MCF 10A (cell line): ENCODE measurements at regions of chr4 and their contacts with region 1.

Region 1: DNA sequence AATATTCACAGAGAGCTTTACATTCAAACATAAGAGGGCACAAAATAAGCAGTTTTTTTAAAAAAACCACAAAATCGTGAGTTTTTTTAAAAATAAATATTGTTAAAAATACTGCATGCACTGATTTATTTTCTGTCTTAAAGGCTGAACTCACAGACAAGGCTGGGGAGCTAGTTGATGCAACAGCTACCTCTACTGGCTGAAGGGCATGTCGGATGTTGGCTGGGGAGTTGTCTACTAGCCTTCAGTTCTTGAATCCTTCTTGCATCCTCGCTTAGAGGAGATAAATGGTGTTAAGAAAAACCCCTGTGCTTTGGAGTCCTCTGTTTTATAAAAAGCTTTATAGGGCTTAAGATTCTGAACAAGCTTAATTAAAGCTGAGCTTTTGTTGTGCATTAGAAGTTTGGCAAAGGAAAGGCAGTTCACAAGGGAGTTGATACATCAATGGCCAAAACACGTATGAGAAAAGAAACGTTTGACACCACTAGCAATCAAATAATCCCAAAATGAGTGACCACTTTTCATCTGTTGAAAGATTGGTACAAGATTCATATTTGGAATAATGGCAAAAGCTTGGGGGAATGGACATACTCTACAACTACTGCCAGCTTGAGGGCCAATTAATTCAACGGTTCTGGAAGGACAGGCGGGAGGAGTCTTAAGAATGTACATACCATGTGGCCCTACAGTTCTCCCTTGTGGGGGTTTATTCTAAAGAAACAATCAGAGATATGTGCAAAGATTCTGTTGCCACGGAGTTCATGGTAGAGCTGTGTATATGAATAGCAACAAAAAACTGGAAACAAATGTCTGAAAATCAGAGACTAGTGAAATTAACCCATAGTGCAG is 94.7 kb downstream of the SEL1L3 start:
- DNase-seq: peak; percentile 75
- H3K4me3 Mint-ChIP-seq: no peak overlapping the region
- H3K27ac Mint-ChIP-seq: no peak overlapping the region
- H3K4me1 Mint-ChIP-seq: no peaks in the 10 kb centered on the region
- H3K27me3 Mint-ChIP-seq: no peaks in the 10 kb centered on the region
- CTCF ChIP-seq: peak; percentile 85

Region 2: GRCh38 chr4:24809376-24809775 is 958.7 kb before region 1 on chr4:
- CTCF ChIA-PET with region 1: no interaction called
- POLR2A ChIA-PET with region 1: no interaction called
- intact Hi-C with region 1: no loop called
- DNase-seq: peak; percentile 6
- H3K4me3 Mint-ChIP-seq: no peak overlapping the region
- H3K27ac Mint-ChIP-seq: no peak overlapping the region
- H3K4me1 Mint-ChIP-seq: no peaks in the 10 kb centered on the region
- H3K27me3 Mint-ChIP-seq: no peaks in the 10 kb centered on the region
- CTCF ChIP-seq: no peak

Region 3: GRCh38 chr4:25424539-25425228 is 343.4 kb before region 1 on chr4:
- CTCF ChIA-PET with region 1: interaction called, 10 read pairs
- POLR2A ChIA-PET with region 1: no interaction called
- intact Hi-C with region 1: no loop called
- DNase-seq: no peak
- H3K4me3 Mint-ChIP-seq: no peak overlapping the region
- H3K27ac Mint-ChIP-seq: no peak overlapping the region
- H3K4me1 Mint-ChIP-seq: no peaks in the 10 kb centered on the region
- H3K27me3 Mint-ChIP-seq: no peaks in the 10 kb centered on the region
- CTCF ChIP-seq: no peak

Region 4: GRCh38 chr4:25433966-25434827 is 333.9 kb before region 1 on chr4:
- CTCF ChIA-PET with region 1: interaction called, 309 read pairs
- POLR2A ChIA-PET with region 1: interaction called, 4 read pairs
- intact Hi-C with region 1: no loop called
- DNase-seq: no peak
- H3K4me3 Mint-ChIP-seq: no peak overlapping the region
- H3K27ac Mint-ChIP-seq: no peak overlapping the region
- H3K4me1 Mint-ChIP-seq: no peaks in the 10 kb centered on the region
- H3K27me3 Mint-ChIP-seq: no peaks in the 10 kb centered on the region
- CTCF ChIP-seq: no peak

Region 5: DNA sequence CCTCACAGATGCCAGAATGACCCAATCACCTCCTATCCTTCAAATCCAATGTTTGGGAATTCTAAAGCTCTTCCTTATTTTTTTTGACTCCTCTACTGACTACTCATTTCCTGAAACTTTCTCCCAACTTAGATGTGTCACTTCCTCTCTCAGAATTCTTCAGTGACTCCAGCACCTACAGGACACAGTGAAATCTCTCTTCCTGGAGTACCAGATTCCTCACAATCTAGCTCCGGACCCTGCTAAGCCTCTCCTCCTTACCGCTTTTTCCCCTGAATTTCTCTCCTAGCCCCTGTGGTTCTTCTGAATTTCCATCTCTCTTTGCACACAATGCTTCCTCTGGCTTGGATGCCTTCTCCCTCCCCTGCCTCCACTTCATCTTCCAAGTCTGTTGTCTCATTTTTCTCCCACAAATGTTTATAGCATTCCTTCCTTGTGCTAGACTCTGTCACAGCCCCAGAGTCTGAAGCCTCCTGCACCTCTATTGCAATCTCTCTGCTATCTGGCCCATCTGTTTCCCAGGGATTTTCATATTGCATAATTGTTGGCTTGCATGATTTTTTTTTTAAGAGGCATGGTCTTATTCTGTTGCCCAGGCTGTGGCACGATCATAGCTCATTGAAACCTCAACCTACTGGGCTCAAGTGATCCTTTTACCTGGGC is 310.9 kb before region 1 on chr4:
- CTCF ChIA-PET with region 1: interaction called, 14 read pairs
- POLR2A ChIA-PET with region 1: interaction called, 5 read pairs
- intact Hi-C with region 1: no loop called
- DNase-seq: peak; percentile 70
- H3K4me3 Mint-ChIP-seq: no peak overlapping the region
- H3K27ac Mint-ChIP-seq: no peak overlapping the region
- H3K4me1 Mint-ChIP-seq: peaks cover 15% of the 10 kb centered on the region
- H3K27me3 Mint-ChIP-seq: no peaks in the 10 kb centered on the region
- CTCF ChIP-seq: no peak

Region 6: GRCh38 chr4:25779016-25779415 is 10.9 kb after region 1 on chr4:
- CTCF ChIA-PET with region 1: interaction called, 22 read pairs
- POLR2A ChIA-PET with region 1: interaction called, 3 read pairs
- intact Hi-C with region 1: no loop called
- DNase-seq: peak; percentile 39
- H3K4me3 Mint-ChIP-seq: no peak overlapping the region
- H3K27ac Mint-ChIP-seq: no peak overlapping the region
- H3K4me1 Mint-ChIP-seq: no peaks in the 10 kb centered on the region
- H3K27me3 Mint-ChIP-seq: no peaks in the 10 kb centered on the region
- CTCF ChIP-seq: no peak

Region 7: DNA sequence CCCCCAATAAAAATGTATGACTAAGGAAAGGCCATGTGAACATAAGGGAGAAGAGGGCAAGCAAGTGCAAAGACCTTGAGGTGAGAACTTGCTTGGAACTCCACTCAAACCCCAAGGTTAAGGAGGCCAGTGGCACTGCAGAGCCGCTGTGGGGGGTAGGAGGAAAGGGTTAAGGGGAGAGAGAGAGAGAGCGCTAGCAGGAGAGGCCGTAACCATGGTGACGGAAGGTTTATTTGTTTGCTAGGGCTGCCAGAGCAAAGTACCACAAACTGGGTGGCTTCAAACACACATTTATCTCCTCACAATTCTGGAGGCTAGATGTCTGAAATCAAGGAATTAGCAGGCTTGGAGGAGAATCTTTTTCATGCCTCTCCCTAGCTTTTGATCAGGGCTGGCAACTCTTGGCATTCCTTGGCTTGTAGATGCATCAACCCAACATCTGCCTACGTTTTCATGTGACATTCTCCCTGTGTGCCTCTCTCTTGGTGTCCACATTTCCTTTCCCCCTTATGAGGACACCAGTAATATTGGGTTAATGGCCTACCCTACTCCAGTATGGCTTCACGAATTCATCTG is 181.2 kb after region 1 on chr4:
- CTCF ChIA-PET with region 1: no interaction called
- POLR2A ChIA-PET with region 1: no interaction called
- intact Hi-C with region 1: no loop called
- DNase-seq: no peak
- H3K4me3 Mint-ChIP-seq: no peak overlapping the region
- H3K27ac Mint-ChIP-seq: no peak overlapping the region
- H3K4me1 Mint-ChIP-seq: peaks cover 7% of the 10 kb centered on the region
- H3K27me3 Mint-ChIP-seq: peaks cover 28% of the 10 kb centered on the region
- CTCF ChIP-seq: no peak